Activated naive CD4-positive, alpha-beta T cell treated with anti-CD3 and anti-CD28 coated beads, Interleukin-2, amount 10 ng/mL, durations not matched to agents 7 days and 5 days (primary cell): ENCODE measurements at regions of chr4 and their contacts with region 1.

Region 1: GRCh38 chr4:165131247-165131832 is 18.7 kb upstream of the TMEM192 start:
- DNase-seq: peak; percentile 86
- H3K4me3 Mint-ChIP-seq: no peak overlapping the region
- H3K27ac Mint-ChIP-seq: no peak overlapping the region
- H3K4me1 Mint-ChIP-seq: peaks cover 31% of the 10 kb centered on the region
- H3K27me3 Mint-ChIP-seq: peaks cover 26% of the 10 kb centered on the region

Region 2: DNA sequence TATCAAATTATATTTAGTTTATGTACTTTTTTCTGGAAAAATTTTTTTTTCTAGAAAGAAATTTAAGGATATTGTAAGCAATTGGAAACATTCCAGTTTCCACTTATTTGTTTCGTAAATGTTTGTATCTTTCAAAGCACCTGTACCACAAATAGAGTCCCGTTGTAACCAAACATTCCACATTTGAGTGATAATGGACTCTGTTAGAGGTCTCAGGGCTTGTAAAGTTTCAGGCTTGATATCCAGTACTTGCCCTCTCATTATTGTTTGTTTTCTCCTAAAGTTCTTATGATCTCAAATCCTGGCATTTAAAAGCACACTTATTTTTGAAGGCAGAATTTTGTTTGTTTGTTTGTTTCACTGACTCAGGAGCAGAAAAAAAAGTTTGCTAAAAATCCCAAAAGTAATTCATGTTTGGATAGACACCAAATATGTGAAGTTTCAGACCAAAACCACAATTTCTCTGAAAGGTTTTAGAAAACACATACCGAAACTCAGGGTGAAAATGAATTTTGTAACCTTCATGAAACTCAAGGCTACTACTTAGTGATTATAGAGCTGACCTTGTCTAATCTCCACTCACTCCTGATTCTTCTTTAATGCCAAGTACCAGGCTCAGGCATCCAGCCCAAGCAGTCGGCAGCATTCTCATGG is 13.0 kb before region 1 on chr4:
- CTCF ChIA-PET with region 1: interaction called, 15 read pairs
- DNase-seq: no peak
- H3K4me3 Mint-ChIP-seq: no peak overlapping the region
- H3K27ac Mint-ChIP-seq: no peak overlapping the region
- H3K4me1 Mint-ChIP-seq: peaks cover 14% of the 10 kb centered on the region
- H3K27me3 Mint-ChIP-seq: peaks cover 28% of the 10 kb centered on the region

Region 3: GRCh38 chr4:165343353-165344191 is 212.2 kb after region 1 on chr4:
- CTCF ChIA-PET with region 1: interaction called, 62 read pairs
- DNase-seq: peak; percentile 44
- H3K4me3 Mint-ChIP-seq: no peak overlapping the region
- H3K27ac Mint-ChIP-seq: no peak overlapping the region
- H3K4me1 Mint-ChIP-seq: no peaks in the 10 kb centered on the region
- H3K27me3 Mint-ChIP-seq: no peaks in the 10 kb centered on the region

Region 4: GRCh38 chr4:165359501-165359900 is 228.2 kb after region 1 on chr4:
- CTCF ChIA-PET with region 1: interaction called, 13 read pairs
- DNase-seq: no peak
- H3K4me3 Mint-ChIP-seq: no peak overlapping the region
- H3K27ac Mint-ChIP-seq: no peak overlapping the region
- H3K4me1 Mint-ChIP-seq: no peaks in the 10 kb centered on the region
- H3K27me3 Mint-ChIP-seq: peaks cover 26% of the 10 kb centered on the region

Region 5: DNA sequence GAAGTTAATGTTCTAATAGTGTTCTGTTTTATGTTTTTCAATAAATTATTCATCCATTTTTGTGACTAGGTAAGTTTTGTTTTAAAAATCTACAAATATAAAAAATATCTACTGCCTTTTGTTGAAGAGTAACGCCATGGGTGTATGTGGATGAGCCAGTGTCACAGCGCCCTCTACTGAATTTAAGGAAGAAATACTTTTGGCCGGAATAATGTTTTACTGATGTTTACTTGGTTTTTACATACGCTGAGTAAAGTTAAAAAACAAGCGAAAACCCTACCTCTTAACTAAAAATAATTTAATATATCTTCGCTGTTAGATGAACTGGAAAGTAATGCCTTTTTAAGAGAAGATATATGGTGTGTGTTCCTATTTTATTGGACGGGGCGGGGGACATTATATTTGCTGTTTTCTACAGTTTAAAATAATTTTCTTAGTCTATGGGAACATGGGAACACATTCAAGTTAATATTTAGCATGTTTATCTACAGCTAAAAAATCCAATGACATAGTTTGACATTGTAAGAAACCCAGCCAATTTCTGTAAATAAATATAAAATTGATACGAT is 333.6 kb after region 1 on chr4:
- CTCF ChIA-PET with region 1: interaction called, 20 read pairs
- DNase-seq: no peak
- H3K4me3 Mint-ChIP-seq: no peak overlapping the region
- H3K27ac Mint-ChIP-seq: no peak overlapping the region
- H3K4me1 Mint-ChIP-seq: no peaks in the 10 kb centered on the region
- H3K27me3 Mint-ChIP-seq: no peaks in the 10 kb centered on the region